Caco-2 (cell line): ENCODE measurements at regions of chr4 and their contacts with region 1.

Region 1: GRCh38 chr4:123555233-123555806 is 158.7 kb downstream of the SPRY1 start:
- DNase-seq: peak; percentile 90 to 94
- H3K4me3 ChIP-seq: no peak overlapping the region
- H3K4me3 Mint-ChIP-seq: peak overlapping the region; percentile 73
- H3K27ac Mint-ChIP-seq: peak overlapping the region; percentile 95
- H3K4me1 ChIP-seq: peaks cover 56% of the 10 kb centered on the region
- H3K4me1 Mint-ChIP-seq: peaks cover 55% of the 10 kb centered on the region
- H3K27me3 ChIP-seq: no peaks in the 10 kb centered on the region
- H3K27me3 Mint-ChIP-seq: no peaks in the 10 kb centered on the region
- CTCF ChIP-seq: no peak

Region 2: GRCh38 chr4:123444290-123444731 is 111.0 kb before region 1 on chr4:
- CTCF ChIA-PET with region 1: no interaction called
- POLR2A ChIA-PET with region 1: no interaction called
- intact Hi-C with region 1: no loop called
- DNase-seq: peak; percentile 82 to 90
- H3K4me3 ChIP-seq: peak overlapping the region; percentile 10; the same call in 1 of the 2 replicates
- H3K4me3 Mint-ChIP-seq: peak overlapping the region; percentile 49
- H3K27ac Mint-ChIP-seq: peak overlapping the region; percentile 40
- H3K4me1 ChIP-seq: peaks cover 19% of the 10 kb centered on the region
- H3K4me1 Mint-ChIP-seq: peaks cover 3% of the 10 kb centered on the region
- H3K27me3 ChIP-seq: no peaks in the 10 kb centered on the region
- H3K27me3 Mint-ChIP-seq: no peaks in the 10 kb centered on the region
- CTCF ChIP-seq: no peak

Region 3: GRCh38 chr4:123505095-123506010 is 50.0 kb before region 1 on chr4:
- CTCF ChIA-PET with region 1: no interaction called
- POLR2A ChIA-PET with region 1: no interaction called
- intact Hi-C with region 1: loop called (anchors 1 kb)
- DNase-seq: peak; percentile 76 to 80
- H3K4me3 ChIP-seq: peak overlapping the region; percentile 40
- H3K4me3 Mint-ChIP-seq: peak overlapping the region; percentile 79
- H3K27ac Mint-ChIP-seq: peak overlapping the region; percentile 91
- H3K4me1 ChIP-seq: peaks cover 30% of the 10 kb centered on the region
- H3K4me1 Mint-ChIP-seq: peaks cover 13% of the 10 kb centered on the region
- H3K27me3 ChIP-seq: no peaks in the 10 kb centered on the region
- H3K27me3 Mint-ChIP-seq: no peaks in the 10 kb centered on the region
- CTCF ChIP-seq: no peak

Region 4: DNA sequence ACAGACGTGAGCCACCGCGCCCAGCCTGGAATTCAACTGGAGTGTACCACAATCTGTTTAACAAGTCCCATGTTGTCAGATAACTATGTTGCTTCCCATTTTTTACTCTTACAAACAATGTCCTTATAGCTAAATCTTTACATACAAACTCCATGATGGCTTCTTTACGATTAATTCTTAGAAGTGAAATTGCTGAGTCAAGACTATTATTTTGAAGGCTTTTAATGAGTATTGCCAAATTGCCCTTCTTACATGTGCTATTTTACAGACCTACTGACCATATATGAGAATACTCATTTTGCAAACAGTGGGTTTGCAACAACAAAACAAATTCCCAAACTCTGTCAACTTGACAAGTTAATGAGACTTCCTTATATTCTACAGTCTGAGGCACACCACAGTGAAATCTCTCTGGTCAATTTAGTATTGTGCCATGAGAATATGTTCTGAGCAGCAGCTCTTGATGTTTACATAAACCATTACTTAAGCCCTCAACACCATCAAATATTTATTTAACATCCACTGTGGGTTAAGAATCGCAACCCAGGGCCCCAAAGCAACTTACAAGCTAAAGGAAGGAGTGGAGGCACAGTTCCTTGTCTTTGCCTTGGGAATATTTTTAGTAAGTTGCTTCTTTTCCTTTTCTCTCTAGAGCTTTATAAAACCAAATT is 30.2 kb before region 1 on chr4:
- CTCF ChIA-PET with region 1: no interaction called
- POLR2A ChIA-PET with region 1: no interaction called
- intact Hi-C with region 1: loop called (anchors 1 kb)
- DNase-seq: peak in 1 of 2 experiments; percentile 21
- H3K4me3 ChIP-seq: no peak overlapping the region
- H3K4me3 Mint-ChIP-seq: no peak overlapping the region
- H3K27ac Mint-ChIP-seq: no peak overlapping the region
- H3K4me1 ChIP-seq: peaks cover 5% of the 10 kb centered on the region; the same call in 1 of the 2 replicates
- H3K4me1 Mint-ChIP-seq: no peaks in the 10 kb centered on the region
- H3K27me3 ChIP-seq: no peaks in the 10 kb centered on the region
- H3K27me3 Mint-ChIP-seq: no peaks in the 10 kb centered on the region
- CTCF ChIP-seq: no peak